Head of caudate nucleus (tissue), 42 donors: ENCODE measurements at regions of chr3 and their contacts with region 1.

Region 1: GRCh38 chr3:39051647-39052561 is at the starts of genes SCN11A and WDR48:
- DNase-seq: peak; percentile 91 to 98 (median 96)

Region 2: DNA sequence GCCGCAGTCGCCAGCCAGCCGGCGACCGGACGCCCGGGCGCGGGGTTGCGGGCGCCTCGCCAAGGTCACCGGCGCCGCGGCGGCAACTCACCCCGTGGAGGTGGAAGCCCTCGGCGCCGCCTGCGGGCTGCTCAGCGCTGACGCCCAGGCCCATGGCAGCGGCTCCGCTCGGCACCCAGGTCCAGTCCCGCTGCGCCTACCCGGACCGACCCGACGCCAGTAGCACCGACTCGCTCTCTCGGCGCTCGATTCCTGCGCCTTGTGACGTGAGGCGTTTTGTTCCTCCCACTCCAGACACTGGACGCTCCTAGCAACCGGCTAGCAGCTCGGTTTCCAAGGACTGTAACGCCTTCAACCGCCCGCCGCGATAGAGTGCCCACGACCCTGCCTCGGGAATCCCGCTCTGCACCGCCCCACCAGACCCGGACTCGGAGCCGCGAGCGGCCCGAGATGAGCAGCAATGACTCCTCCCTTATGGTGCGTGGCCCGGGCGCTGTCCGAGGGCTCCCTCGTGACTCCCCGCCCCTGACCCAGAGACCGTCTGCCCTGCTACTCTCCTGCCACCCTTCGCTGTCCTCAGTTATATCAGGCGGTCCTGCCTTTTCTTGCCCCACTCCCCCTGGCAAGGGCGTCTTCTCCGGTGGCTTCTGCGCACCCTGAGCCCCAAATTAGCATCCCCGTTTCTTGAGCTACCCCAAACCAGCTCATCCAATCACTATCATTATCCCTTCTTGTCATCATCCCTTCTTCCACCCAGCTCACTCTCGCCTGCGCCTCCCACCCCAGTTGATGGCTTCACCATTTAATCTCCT is 55.7 kb after region 1 on chr3 and contains the starts of genes GORASP1 and TTC21A:
- intact Hi-C with region 1: loop called (anchors 10 kb)
- DNase-seq: peak; percentile 88 to 97 (median 94)